ENCODE measurements at regions of chr1 and their contacts with region 1.

Region 1: DNA sequence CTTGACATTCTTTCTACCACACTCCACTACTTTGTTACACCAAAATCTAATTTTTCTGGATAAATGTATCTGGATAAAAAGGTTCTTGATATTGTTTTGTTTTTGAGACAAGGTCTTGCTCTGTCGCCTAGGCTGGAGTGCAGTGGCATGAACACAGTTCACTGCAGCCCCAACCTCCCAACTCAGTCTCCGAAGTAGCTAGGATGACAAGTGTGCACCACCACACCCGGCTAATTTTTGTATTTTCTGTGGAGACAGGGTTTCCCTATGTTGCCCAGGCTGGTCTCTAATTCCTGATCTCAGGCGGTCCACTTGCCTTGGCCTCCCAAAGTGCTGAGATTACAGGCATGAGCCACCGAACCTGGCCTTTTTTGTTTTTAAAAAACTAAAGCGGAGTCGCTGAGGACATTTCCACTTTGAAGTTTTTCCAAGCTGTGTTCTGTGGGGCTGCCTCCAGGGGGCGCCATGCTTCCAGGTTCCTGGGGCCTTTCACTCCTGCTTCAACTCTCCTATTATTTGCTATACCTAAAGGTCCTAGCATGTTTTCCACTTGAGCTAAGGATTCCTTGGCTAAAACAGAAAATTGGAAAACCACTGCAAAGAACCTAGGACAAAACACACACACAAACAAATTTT is 14.1 kb upstream of the NCMAP start:
- DNase-seq: no peak
- ATAC-seq: no peak
- H3K4me3 ChIP-seq: no peak overlapping the region
- H3K27ac ChIP-seq: no peak overlapping the region
- H3K4me1 ChIP-seq: peaks cover 3% of the 10 kb centered on the region; the same call in 1 of the 2 replicates
- H3K27me3 ChIP-seq: no peaks in the 10 kb centered on the region
- CTCF ChIP-seq: peak; percentile 43
- POLR2A ChIP-seq: no peak
- RAD21 ChIP-seq: peak; percentile 31; the same call in 1 of the 2 replicates

Region 2: DNA sequence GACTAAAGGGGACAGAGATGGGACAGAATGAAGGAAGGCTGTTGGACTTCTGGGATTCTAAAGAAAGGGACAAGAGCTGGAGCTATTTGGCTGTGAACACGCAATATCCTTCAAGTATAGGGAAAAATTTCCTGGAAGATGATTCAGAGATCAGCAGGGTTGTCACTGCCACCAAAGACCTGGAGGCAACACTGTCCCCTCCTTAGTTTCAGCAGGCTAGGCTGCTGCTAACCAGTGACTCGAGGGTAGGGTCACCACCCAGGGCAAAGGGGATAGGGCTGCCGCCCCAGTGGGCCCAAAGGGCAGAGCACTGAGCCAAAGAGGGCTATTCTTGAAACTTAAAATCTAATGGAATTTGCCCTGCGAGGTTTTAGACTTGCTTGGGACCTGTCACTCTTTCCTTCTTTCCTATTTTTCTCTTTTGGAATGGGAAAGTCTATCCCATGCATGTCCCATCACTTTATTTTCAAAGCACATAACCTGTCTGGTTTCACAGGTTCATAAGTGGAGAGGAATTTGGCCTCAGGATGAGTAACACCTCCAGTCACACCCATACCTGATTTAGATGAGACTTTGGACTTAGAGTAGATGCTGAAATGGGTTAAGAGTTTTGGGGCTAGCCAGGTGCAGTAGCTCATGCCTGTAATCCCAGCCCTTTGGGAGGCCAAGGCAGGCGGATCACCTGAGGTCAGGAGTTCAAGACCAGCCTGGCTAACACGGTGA is 366.6 kb before region 1 on chr1:
- CTCF ChIA-PET with region 1: interaction called, 12 read pairs
- POLR2A ChIA-PET with region 1: no interaction called
- dilution Hi-C with region 1: no loop called
- in situ Hi-C with region 1: no loop called
- intact Hi-C with region 1: no loop called
- DNase-seq: no peak
- ATAC-seq: no peak
- H3K4me3 ChIP-seq: no peak overlapping the region
- H3K27ac ChIP-seq: no peak overlapping the region
- H3K4me1 ChIP-seq: no peaks in the 10 kb centered on the region
- H3K27me3 ChIP-seq: peaks cover 35% of the 10 kb centered on the region
- CTCF ChIP-seq: no peak
- POLR2A ChIP-seq: no peak
- RAD21 ChIP-seq: no peak

Region 3: DNA sequence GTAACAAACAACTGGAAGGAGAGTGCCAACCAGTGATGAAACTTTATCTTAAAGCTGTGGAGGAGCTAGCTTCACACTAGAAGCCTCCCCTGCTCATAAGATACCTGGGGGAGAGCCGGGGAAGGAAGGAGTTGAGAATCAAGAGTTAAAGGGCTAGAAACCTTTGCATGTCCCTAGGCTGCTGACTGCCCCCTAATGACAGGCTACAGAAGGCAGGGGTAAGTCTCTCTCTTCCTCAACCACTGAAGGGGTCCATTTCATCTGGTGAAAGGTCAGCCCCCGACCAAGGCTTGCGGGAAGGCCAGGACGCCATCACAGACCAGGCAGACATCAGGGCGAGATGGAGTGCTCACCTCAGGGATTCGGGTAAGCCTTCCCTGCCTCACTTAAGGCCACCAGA is 288.3 kb before region 1 on chr1:
- CTCF ChIA-PET with region 1: no interaction called
- POLR2A ChIA-PET with region 1: no interaction called
- dilution Hi-C with region 1: no loop called
- in situ Hi-C with region 1: no loop called
- intact Hi-C with region 1: no loop called
- DNase-seq: no peak
- ATAC-seq: no peak
- H3K4me3 ChIP-seq: no peak overlapping the region
- H3K27ac ChIP-seq: no peak overlapping the region
- H3K4me1 ChIP-seq: no peaks in the 10 kb centered on the region
- H3K27me3 ChIP-seq: peaks cover 28% of the 10 kb centered on the region
- CTCF ChIP-seq: no peak
- POLR2A ChIP-seq: no peak
- RAD21 ChIP-seq: no peak

Region 4: GRCh38 chr1:25990702-25991395 is 1449.0 kb after region 1 on chr1:
- CTCF ChIA-PET with region 1: no interaction called
- POLR2A ChIA-PET with region 1: no interaction called
- dilution Hi-C with region 1: no loop called
- in situ Hi-C with region 1: no loop called
- intact Hi-C with region 1: no loop called
- DNase-seq: no peak
- ATAC-seq: no peak
- H3K4me3 ChIP-seq: no peak overlapping the region
- H3K27ac ChIP-seq: no peak overlapping the region
- H3K4me1 ChIP-seq: peaks cover 10% of the 10 kb centered on the region
- H3K27me3 ChIP-seq: no peaks in the 10 kb centered on the region
- CTCF ChIP-seq: no peak
- POLR2A ChIP-seq: no peak
- RAD21 ChIP-seq: no peak

Measured in IMR-90 (cell line).